Mucosa of descending colon (tissue), 3 donors: ENCODE measurements at regions of chr7 and their contacts with region 1.

Region 1: DNA sequence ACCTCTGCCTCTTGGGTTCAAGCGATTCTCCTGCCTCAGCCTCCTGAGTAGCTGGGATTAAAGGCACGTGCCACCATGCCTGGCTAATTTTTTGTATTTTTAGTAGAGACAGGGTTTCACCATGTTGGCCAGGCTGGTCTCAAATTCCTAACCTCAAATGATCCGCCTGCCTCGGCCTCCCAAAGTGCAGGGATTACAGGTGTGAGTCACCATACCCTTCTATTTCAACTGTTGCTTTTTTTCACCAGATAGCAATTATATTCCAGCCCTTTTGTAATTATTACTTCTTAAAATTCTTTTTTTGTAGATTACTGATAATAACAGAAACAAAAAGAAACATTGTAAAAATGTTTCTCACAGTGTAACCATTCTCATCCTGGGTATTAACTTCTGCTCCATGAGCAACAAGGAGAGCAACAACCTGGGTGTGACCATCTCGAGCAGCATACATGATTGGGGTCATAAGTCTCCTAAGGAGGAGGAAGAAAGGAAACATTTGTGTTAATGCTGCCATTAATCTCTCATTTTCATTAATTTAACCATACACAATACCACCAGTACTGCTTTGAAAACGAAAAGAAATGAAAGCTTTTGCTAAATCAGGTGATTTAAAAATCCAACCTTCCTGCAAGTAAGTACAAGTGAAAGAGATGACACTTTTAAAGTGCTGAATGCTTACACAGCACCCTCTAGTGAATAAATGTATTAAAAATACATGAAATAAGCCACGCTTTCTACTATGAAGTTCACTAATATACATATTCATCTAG is 41.8 kb downstream of the ASZ1 start:
- DNase-seq: no peak
- ATAC-seq: peak; percentile 56
- H3K4me3 ChIP-seq: no peak overlapping the region
- H3K4me1 ChIP-seq: no peaks in the 10 kb centered on the region
- CTCF ChIP-seq: no peak

Region 2: DNA sequence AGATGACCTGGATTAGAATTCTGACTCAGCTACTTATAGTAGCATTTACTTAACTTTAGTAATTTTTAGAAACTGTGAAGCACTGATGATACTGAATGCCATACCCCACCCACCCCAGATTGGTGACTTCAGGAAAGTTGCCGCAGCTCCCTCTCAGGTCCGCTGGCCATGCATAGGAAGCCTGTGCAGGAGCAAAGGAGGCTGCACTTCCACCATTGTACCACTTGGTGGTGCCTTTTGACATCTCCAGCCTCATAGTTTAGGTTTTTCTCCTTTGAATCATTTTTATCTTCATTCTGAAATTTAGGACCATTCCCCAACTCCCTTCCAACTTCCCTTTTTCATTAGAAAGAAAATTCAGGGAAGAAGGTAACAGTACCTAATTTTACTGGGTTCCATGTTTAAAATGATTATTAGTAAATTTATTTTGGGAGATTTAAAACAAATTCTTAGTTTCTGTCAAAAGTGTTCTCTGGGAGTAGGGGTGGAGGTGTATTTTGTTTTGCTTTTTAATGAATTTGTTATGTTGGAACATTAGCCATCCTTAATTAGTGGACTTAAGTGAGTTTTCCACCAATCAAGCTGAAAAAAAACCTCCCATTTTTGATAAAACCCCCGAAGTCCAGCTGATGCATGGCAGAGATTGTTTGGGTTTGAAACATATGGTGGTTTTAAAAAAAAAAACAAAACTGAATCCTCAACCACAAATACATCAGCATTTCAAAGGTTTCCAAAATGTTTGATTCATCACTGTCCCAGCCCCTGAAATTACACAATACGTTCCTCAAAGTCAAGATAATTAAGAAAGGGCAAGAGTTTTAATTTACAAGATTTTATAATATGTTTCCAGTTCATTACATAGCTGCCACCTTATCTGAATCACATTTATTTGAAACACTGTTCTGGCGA is 172.3 kb before region 1 on chr7:
- intact Hi-C with region 1: loop called in 1 of 2 experiments (anchors 10 kb)
- DNase-seq: peak in 2 of 3 donors; percentile 41 to 75
- ATAC-seq: peak; percentile 80
- H3K4me3 ChIP-seq: no peak overlapping the region
- H3K4me1 ChIP-seq: no peaks in the 10 kb centered on the region
- CTCF ChIP-seq: peak; percentile 78

Region 3: GRCh38 chr7:117338020-117338419 is 47.5 kb before region 1 on chr7:
- intact Hi-C with region 1: no loop called
- DNase-seq: no peak
- ATAC-seq: no peak
- H3K4me3 ChIP-seq: no peak overlapping the region
- H3K4me1 ChIP-seq: no peaks in the 10 kb centered on the region
- CTCF ChIP-seq: no peak

Region 4: GRCh38 chr7:117458977-117459583 is 73.6 kb after region 1 on chr7:
- intact Hi-C with region 1: no loop called
- DNase-seq: no peak
- ATAC-seq: peak; percentile 44
- H3K4me3 ChIP-seq: no peak overlapping the region
- H3K4me1 ChIP-seq: no peaks in the 10 kb centered on the region
- CTCF ChIP-seq: peak; percentile 8